ENCODE measurements at regions of chr19 and their contacts with region 1.

Region 1: GRCh38 chr19:30799865-30800755 is 427.9 kb downstream of the ZNF536 start:
- DNase-seq: peak; percentile 84
- H3K4me3 ChIP-seq: no peak overlapping the region
- H3K27ac ChIP-seq: no peak overlapping the region
- H3K4me1 ChIP-seq: peaks cover 0 to 13% (median 2%) of the 10 kb centered on the region in 6 donors
- H3K27me3 ChIP-seq: peaks cover 0 to 27% (median 0%) of the 10 kb centered on the region in 7 donors
- CTCF ChIP-seq: peak; percentile 15 to 85 (median 60)
- POLR2A ChIP-seq: no peak

Region 2: GRCh38 chr19:30214651-30215210 is 585.4 kb before region 1 on chr19:
- intact Hi-C with region 1: no loop called
- DNase-seq: no peak
- H3K4me3 ChIP-seq: no peak overlapping the region
- H3K27ac ChIP-seq: no peak overlapping the region
- H3K4me1 ChIP-seq: peaks cover 0 to 8% (median 0%) of the 10 kb centered on the region in 6 donors
- H3K27me3 ChIP-seq: peaks cover 0 to 58% (median 0%) of the 10 kb centered on the region in 7 donors
- CTCF ChIP-seq: no peak
- POLR2A ChIP-seq: no peak

Region 3: DNA sequence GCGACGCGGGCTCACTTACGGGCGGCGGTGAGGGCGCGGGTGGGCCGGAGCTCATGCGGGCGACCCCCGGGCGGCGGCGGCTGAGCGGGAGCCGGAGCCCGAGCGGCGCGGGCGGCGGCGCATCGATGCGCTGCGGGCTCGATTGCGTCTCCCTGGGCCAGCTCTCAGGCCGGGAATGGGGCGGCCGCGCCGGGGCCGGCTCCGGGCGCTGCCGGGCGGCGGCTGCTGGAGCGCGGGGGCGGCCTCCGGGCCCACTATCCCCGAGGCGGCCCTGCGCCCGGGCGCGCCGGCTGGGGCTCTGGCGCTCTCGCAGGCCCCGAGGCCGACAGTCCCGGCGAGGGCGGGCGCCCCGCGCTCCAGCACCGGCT is 550.6 kb after region 1 on chr19:
- intact Hi-C with region 1: loop called (anchors 10 kb)
- DNase-seq: peak; percentile 82
- H3K4me3 ChIP-seq: peak overlapping the region; percentile 75 to 91 (median 85)
- H3K27ac ChIP-seq: peak overlapping the region; percentile 48 to 93 (median 90)
- H3K4me1 ChIP-seq: peaks cover 14 to 77% (median 39%) of the 10 kb centered on the region in 6 donors
- H3K27me3 ChIP-seq: peaks cover 0 to 100% (median 48%) of the 10 kb centered on the region in 7 donors
- CTCF ChIP-seq: no peak
- POLR2A ChIP-seq: no peak